ENCODE measurements at regions of chr20 and their contacts with region 1.

Region 1: DNA sequence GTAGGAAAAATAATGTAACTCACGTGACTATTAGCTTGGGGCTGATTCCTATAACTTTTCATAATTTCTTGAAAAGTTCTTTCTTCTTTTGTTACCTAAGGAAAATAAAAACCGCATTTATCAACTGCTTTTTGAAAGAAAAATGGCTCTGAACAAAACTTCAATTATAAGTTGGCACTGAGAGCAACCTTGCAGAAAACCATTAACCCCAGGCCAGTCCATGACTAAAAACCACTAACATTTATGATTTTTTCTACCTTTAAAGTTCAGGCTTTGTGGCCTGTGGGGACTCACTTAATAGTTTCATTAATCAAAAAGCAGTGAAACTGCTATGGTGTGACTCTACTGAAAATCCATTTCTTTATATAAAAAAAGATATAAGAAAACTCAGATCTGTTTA is 69.1 kb upstream of the SAMHD1 start:
- DNase-seq: no peak
- H3K4me3 Mint-ChIP-seq: no peak overlapping the region
- H3K27ac Mint-ChIP-seq: no peak overlapping the region
- H3K4me1 Mint-ChIP-seq: peaks cover 36% of the 10 kb centered on the region
- H3K27me3 Mint-ChIP-seq: no peaks in the 10 kb centered on the region

Region 2: DNA sequence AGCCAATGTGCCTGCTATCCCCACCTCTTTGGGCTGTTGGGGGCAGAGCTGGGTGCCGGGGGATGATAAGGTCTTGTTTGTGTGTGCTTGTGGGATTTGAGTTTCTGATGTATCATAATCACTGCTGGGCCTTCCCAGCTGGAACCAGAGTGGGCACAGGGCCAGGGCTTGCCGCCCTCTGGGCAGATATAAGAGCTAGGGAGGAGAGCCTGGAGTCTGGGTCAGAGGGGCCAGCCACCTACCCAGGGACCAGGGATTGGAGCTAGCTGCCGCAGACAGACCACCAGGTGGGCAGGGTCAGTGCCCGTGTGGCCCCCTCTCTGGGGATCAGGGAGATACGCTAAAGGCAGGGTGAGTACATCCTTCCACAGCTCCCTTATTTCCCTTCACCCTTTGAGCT is 147.8 kb before region 1 on chr20:
- CTCF ChIA-PET with region 1: no interaction called
- DNase-seq: no peak
- H3K4me3 Mint-ChIP-seq: no peak overlapping the region
- H3K27ac Mint-ChIP-seq: no peak overlapping the region
- H3K4me1 Mint-ChIP-seq: no peaks in the 10 kb centered on the region
- H3K27me3 Mint-ChIP-seq: peaks cover 34% of the 10 kb centered on the region

Region 3: GRCh38 chr20:37007898-37008649 is 12.6 kb before region 1 on chr20:
- CTCF ChIA-PET with region 1: interaction called, 10 read pairs
- DNase-seq: peak; percentile 57
- H3K4me3 Mint-ChIP-seq: no peak overlapping the region
- H3K27ac Mint-ChIP-seq: peak overlapping the region; percentile 78
- H3K4me1 Mint-ChIP-seq: peaks cover 50% of the 10 kb centered on the region
- H3K27me3 Mint-ChIP-seq: no peaks in the 10 kb centered on the region

Measured in activated naive CD4-positive, alpha-beta T cell treated with anti-CD3 and anti-CD28 coated beads, Interleukin-2, amount 10 ng/mL, durations not matched to agents 7 days and 5 days (primary cell).